A549 (cell line): ENCODE measurements at regions of chrX and their contacts with region 1.

Region 1: GRCh38 chrX:148049441-148049840 is 68.3 kb downstream of the FMR1NB start:
- DNase-seq: peak; percentile 1 to 24
- ATAC-seq: peak in 1 of 2 experiments; percentile 56; a peak in 2 of 6 replicates
- H3K4me3 ChIP-seq: no peak overlapping the region
- H3K27ac ChIP-seq: no peak overlapping the region
- H3K4me1 ChIP-seq: no peaks in the 10 kb centered on the region
- CTCF ChIP-seq: peak; percentile 53
- EP300 ChIP-seq: no peak
- POLR2A ChIP-seq: no peak
- RAD21 ChIP-seq: peak; percentile 62 to 65

Region 2: GRCh38 chrX:148035380-148035779 is 14.1 kb before region 1 on chrX:
- CTCF ChIA-PET with region 1: no interaction called
- POLR2A ChIA-PET with region 1: no interaction called
- DNase-seq: no peak
- ATAC-seq: no peak
- H3K4me3 ChIP-seq: no peak overlapping the region
- H3K27ac ChIP-seq: no peak overlapping the region
- H3K4me1 ChIP-seq: no peaks in the 10 kb centered on the region
- CTCF ChIP-seq: no peak
- EP300 ChIP-seq: no peak
- POLR2A ChIP-seq: no peak
- RAD21 ChIP-seq: no peak

Region 3: GRCh38 chrX:148588649-148589310 is 539.3 kb after region 1 on chrX:
- CTCF ChIA-PET with region 1: no interaction called
- POLR2A ChIA-PET with region 1: no interaction called
- DNase-seq: no peak
- ATAC-seq: no peak
- H3K4me3 ChIP-seq: no peak overlapping the region
- H3K27ac ChIP-seq: no peak overlapping the region
- H3K4me1 ChIP-seq: no peaks in the 10 kb centered on the region
- CTCF ChIP-seq: no peak
- EP300 ChIP-seq: no peak
- POLR2A ChIP-seq: no peak
- RAD21 ChIP-seq: no peak

Region 4: GRCh38 chrX:149470955-149471354 is 1421.5 kb after region 1 on chrX:
- CTCF ChIA-PET with region 1: interaction called, 16 read pairs
- POLR2A ChIA-PET with region 1: no interaction called
- DNase-seq: peak; percentile 62 to 68
- ATAC-seq: peak; percentile 83 to 96
- H3K4me3 ChIP-seq: no peak overlapping the region
- H3K27ac ChIP-seq: no peak overlapping the region
- H3K4me1 ChIP-seq: 0 out of 3 replicates have a peak, but pooled peaks cover 3% of the 10 kb centered on the region
- CTCF ChIP-seq: peak; percentile 69
- EP300 ChIP-seq: no peak
- POLR2A ChIP-seq: no peak
- RAD21 ChIP-seq: peak; percentile 85 to 89